Prostate gland (tissue), 2 donors: ENCODE measurements at regions of chr3 and their contacts with region 1.

Region 1: GRCh38 chr3:30353711-30354467 is 252.5 kb upstream of the TGFBR2 start:
- DNase-seq: no peak
- H3K4me3 ChIP-seq: no peak overlapping the region
- H3K27ac ChIP-seq: no peak overlapping the region
- H3K4me1 ChIP-seq: no peaks in the 10 kb centered on the region
- H3K27me3 ChIP-seq: no peaks in the 10 kb centered on the region
- CTCF ChIP-seq: no peak
- POLR2A ChIP-seq: no peak

Region 2: GRCh38 chr3:30233924-30234666 is 119.8 kb before region 1 on chr3:
- intact Hi-C with region 1: no loop called
- DNase-seq: no peak
- H3K4me3 ChIP-seq: no peak overlapping the region
- H3K27ac ChIP-seq: no peak overlapping the region
- H3K4me1 ChIP-seq: no peaks in the 10 kb centered on the region
- H3K27me3 ChIP-seq: no peaks in the 10 kb centered on the region
- CTCF ChIP-seq: no peak
- POLR2A ChIP-seq: no peak

Region 3: GRCh38 chr3:30426293-30426993 is 72.6 kb after region 1 on chr3:
- intact Hi-C with region 1: loop called (anchors 10 kb)
- DNase-seq: peak; percentile 17
- H3K4me3 ChIP-seq: no peak overlapping the region
- H3K27ac ChIP-seq: no peak overlapping the region
- H3K4me1 ChIP-seq: no peaks in the 10 kb centered on the region
- H3K27me3 ChIP-seq: no peaks in the 10 kb centered on the region
- CTCF ChIP-seq: no peak
- POLR2A ChIP-seq: no peak

Region 4: DNA sequence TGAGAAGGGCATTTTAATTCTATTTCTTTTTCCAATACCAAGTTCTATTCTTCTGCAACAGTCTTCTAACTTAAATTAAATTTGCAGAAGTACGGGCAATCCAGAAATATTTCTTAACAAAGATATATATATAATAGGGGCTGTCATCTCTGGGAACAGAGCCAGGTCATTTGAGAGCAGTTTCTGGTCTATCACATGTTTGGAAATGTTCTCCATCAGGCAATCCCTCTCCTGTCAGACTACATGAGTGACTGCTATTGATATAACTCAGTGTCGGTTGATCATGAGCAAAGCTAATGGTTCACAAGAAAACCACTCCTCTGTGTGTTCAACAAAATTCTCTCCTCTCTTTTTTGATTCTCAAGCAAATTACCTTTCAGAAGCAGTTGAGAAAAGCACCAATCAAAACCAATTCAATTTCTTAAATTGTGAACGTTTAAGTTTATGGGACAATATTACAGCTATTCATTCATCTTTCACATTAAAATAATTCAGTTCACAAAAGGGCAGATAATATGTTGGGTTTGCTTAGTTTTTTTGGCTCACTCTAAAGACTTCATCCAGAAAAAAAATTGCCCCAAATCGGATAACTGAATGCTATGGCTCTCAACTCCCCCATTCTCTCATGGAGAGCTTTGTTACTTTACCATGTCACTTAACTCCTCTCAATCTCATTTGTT is 99.6 kb after region 1 on chr3:
- intact Hi-C with region 1: loop called (anchors 10 kb)
- DNase-seq: no peak
- H3K4me3 ChIP-seq: no peak overlapping the region
- H3K27ac ChIP-seq: no peak overlapping the region
- H3K4me1 ChIP-seq: peaks cover 2% of the 10 kb centered on the region
- H3K27me3 ChIP-seq: no peaks in the 10 kb centered on the region
- CTCF ChIP-seq: no peak
- POLR2A ChIP-seq: no peak